CD4-positive, alpha-beta T cell (primary cell): ENCODE measurements at regions of chr12 and their contacts with region 1.

Region 1: GRCh38 chr12:127145929-127146789 is 1120.8 kb upstream of the TMEM132C start:
- DNase-seq: peak; percentile 34 to 79 (median 70)
- ATAC-seq: peak; percentile 91
- H3K4me3 ChIP-seq: peak overlapping the region; percentile 40
- H3K4me3 Mint-ChIP-seq: peak overlapping the region; percentile 87
- H3K27ac ChIP-seq: no peak overlapping the region
- H3K27ac Mint-ChIP-seq: peak overlapping the region; percentile 36
- H3K4me1 ChIP-seq: peaks cover 7% of the 10 kb centered on the region
- H3K4me1 Mint-ChIP-seq: peaks cover 19% of the 10 kb centered on the region
- H3K27me3 ChIP-seq: peaks cover 0 to 7% of the 10 kb centered on the region in 2 experiments
- H3K27me3 Mint-ChIP-seq: peaks cover 6% of the 10 kb centered on the region
- CTCF ChIP-seq: no peak

Region 2: DNA sequence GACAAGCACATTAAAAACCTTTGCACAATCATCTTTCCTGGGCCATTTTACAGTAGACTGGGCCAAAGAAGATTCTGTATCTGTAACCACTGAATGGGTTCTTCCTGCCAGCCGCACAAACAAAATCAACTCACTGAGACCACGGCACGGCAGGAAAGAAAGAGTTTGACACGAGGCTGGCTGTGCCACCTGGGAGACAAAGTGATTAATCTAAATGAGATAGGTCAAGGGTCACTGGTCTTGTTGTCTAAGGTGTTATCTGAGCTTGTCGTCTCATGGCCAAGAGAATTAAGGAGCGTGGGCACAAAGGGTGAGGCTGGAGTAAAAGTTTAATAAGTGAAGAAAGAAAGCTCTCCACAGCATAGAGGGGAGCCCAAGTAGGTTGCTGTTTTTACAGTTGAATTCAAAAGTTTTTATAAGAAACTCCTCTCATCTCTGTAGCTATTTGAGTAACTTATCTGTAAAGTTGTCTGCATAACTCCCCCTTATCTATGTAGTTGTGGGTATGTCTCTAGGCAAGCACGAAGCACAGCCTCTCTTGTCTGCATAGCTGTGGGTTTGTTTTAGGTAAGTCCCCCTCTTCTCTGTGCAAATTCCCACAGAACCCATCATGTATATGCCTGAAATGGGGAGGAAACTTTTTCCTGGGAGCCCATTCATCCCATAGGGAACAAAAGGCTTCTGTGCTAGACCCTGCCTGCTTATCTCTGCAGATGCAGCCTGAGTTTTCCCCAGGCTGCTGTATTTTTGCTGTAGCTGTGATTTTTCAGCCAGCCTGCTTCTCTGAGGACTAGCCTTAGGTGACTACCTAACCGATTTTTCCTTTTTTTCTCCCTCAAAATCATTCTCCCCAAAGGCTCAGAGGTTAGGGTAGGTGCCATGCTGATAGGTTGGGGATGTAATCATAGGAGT is 193.8 kb before region 1 on chr12:
- CTCF ChIA-PET with region 1: no interaction called
- POLR2A ChIA-PET with region 1: no interaction called
- intact Hi-C with region 1: no loop called
- DNase-seq: no peak
- ATAC-seq: no peak
- H3K4me3 ChIP-seq: no peak overlapping the region
- H3K4me3 Mint-ChIP-seq: no peak overlapping the region
- H3K27ac ChIP-seq: no peak overlapping the region
- H3K27ac Mint-ChIP-seq: no peak overlapping the region
- H3K4me1 ChIP-seq: no peaks in the 10 kb centered on the region
- H3K4me1 Mint-ChIP-seq: no peaks in the 10 kb centered on the region
- H3K27me3 ChIP-seq: no peaks in the 10 kb centered on the region
- H3K27me3 Mint-ChIP-seq: no peaks in the 10 kb centered on the region
- CTCF ChIP-seq: no peak

Region 3: GRCh38 chr12:127162902-127163301 is 16.7 kb after region 1 on chr12:
- CTCF ChIA-PET with region 1: no interaction called
- POLR2A ChIA-PET with region 1: interaction called, 7 read pairs
- intact Hi-C with region 1: loop called (anchors 1 to 2 kb)
- DNase-seq: peak in 13 of 14 experiments; percentile 9 to 78 (median 30)
- ATAC-seq: peak; percentile 69
- H3K4me3 ChIP-seq: no peak overlapping the region
- H3K4me3 Mint-ChIP-seq: peak overlapping the region; percentile 2
- H3K27ac ChIP-seq: peak overlapping the region in 1 of 2 donors; percentile 21
- H3K27ac Mint-ChIP-seq: peak overlapping the region; percentile 47
- H3K4me1 ChIP-seq: peaks cover 19% of the 10 kb centered on the region
- H3K4me1 Mint-ChIP-seq: peaks cover 23% of the 10 kb centered on the region
- H3K27me3 ChIP-seq: peaks cover 0 to 5% of the 10 kb centered on the region in 2 experiments
- H3K27me3 Mint-ChIP-seq: peaks cover 6% of the 10 kb centered on the region
- CTCF ChIP-seq: no peak

Region 4: GRCh38 chr12:127214186-127214585 is 68.0 kb after region 1 on chr12:
- CTCF ChIA-PET with region 1: no interaction called
- POLR2A ChIA-PET with region 1: no interaction called
- intact Hi-C with region 1: no loop called
- DNase-seq: no peak
- ATAC-seq: no peak
- H3K4me3 ChIP-seq: no peak overlapping the region
- H3K4me3 Mint-ChIP-seq: no peak overlapping the region
- H3K27ac ChIP-seq: no peak overlapping the region
- H3K27ac Mint-ChIP-seq: no peak overlapping the region
- H3K4me1 ChIP-seq: no peaks in the 10 kb centered on the region
- H3K4me1 Mint-ChIP-seq: no peaks in the 10 kb centered on the region
- H3K27me3 ChIP-seq: no peaks in the 10 kb centered on the region
- H3K27me3 Mint-ChIP-seq: no peaks in the 10 kb centered on the region
- CTCF ChIP-seq: no peak

Region 5: DNA sequence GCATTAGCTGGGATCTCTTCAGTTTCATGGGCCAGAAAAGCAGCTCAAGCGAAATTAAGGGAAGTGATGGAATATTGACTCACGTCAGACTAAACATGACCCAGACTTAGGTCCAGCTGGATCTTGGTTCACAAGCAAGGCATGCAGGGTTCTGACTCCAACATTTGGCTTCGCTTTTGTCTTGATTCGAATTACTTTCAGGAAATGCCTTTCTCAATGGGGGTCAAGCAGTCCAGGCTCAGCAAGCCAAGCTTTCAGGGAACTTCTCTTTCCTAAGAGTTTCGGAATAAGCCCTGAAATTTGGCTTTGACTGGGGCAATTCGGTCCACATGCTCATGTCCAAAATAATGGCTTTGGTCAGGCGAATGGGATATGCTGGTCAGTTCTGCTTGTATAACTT is 442.1 kb after region 1 on chr12:
- CTCF ChIA-PET with region 1: no interaction called
- POLR2A ChIA-PET with region 1: no interaction called
- intact Hi-C with region 1: no loop called
- DNase-seq: no peak
- ATAC-seq: no peak
- H3K4me3 ChIP-seq: no peak overlapping the region
- H3K4me3 Mint-ChIP-seq: no peak overlapping the region
- H3K27ac ChIP-seq: no peak overlapping the region
- H3K27ac Mint-ChIP-seq: no peak overlapping the region
- H3K4me1 ChIP-seq: no peaks in the 10 kb centered on the region
- H3K4me1 Mint-ChIP-seq: no peaks in the 10 kb centered on the region
- H3K27me3 ChIP-seq: no peaks in the 10 kb centered on the region
- H3K27me3 Mint-ChIP-seq: no peaks in the 10 kb centered on the region
- CTCF ChIP-seq: no peak